SK-N-SH (cell line): ENCODE measurements at regions of chr11 and their contacts with region 1.

Region 1: GRCh38 chr11:116386118-116386699 is 386.6 kb downstream of the BUD13 start:
- DNase-seq: no peak
- H3K4me3 ChIP-seq: no peak overlapping the region
- H3K27ac ChIP-seq: peak overlapping the region in 1 of 2 experiments; percentile 96; a peak in 2 of 4 replicates
- H3K4me1 ChIP-seq: peaks cover 0 to 53% of the 10 kb centered on the region in 2 experiments; a peak in 2 of 4 replicates
- H3K27me3 ChIP-seq: no peaks in the 10 kb centered on the region
- CTCF ChIP-seq: no peak
- EP300 ChIP-seq: no peak
- RAD21 ChIP-seq: no peak

Region 2: DNA sequence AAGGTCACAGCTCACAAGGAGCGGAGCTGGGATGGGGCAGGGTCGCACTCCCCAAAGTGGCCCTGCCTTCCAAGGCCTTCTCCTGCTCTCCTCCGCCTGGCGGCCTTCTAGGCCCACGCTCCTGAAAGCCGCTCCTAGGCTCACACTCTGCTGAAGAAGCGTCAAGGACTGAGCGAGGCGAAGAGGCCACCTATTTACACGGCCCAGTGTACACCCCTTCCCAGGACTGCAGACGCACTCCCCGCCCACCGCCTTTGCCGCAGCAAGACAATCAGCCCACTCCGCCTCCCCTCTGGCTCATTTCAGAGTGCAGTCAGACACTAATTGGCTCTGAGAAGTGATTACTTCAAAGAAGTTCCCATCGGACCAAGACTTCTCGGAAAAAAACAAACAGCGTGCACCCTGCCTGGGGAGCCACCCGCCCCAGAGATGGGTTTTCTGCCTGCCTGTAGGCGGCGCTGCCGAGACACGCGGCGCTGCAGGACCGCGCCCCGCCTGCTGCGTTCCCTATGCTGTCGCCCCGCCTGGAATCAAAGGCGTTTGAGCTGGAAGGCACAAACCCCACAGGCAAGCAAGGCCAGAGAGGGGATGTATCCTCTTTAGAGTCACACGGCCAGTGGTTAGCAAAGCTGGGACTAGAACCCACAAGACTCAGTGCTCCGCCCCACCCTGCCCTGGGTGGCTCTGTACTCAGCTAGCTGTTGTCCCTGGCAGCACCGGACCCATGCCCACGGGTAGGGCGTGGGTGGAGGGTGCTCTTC is 28.2 kb before region 1 on chr11:
- CTCF ChIA-PET with region 1: no interaction called
- POLR2A ChIA-PET with region 1: interaction called, 12 read pairs
- DNase-seq: no peak
- H3K4me3 ChIP-seq: no peak overlapping the region; a peak in 1 of 4 replicates
- H3K27ac ChIP-seq: no peak overlapping the region; a peak in 1 of 4 replicates
- H3K4me1 ChIP-seq: peaks cover 0 to 36% of the 10 kb centered on the region in 2 experiments; a peak in 1 of 4 replicates
- H3K27me3 ChIP-seq: no peaks in the 10 kb centered on the region
- CTCF ChIP-seq: no peak
- EP300 ChIP-seq: no peak
- RAD21 ChIP-seq: no peak

Region 3: GRCh38 chr11:116397602-116398084 is 11.4 kb after region 1 on chr11:
- CTCF ChIA-PET with region 1: interaction called, 5 read pairs
- POLR2A ChIA-PET with region 1: interaction called, 17 read pairs
- DNase-seq: no peak
- H3K4me3 ChIP-seq: no peak overlapping the region
- H3K27ac ChIP-seq: peak overlapping the region in 1 of 2 experiments; percentile 87; a peak in 2 of 4 replicates
- H3K4me1 ChIP-seq: peaks cover 0 to 35% of the 10 kb centered on the region in 2 experiments; a peak in 1 of 4 replicates
- H3K27me3 ChIP-seq: no peaks in the 10 kb centered on the region
- CTCF ChIP-seq: no peak
- EP300 ChIP-seq: no peak
- RAD21 ChIP-seq: no peak

Region 4: DNA sequence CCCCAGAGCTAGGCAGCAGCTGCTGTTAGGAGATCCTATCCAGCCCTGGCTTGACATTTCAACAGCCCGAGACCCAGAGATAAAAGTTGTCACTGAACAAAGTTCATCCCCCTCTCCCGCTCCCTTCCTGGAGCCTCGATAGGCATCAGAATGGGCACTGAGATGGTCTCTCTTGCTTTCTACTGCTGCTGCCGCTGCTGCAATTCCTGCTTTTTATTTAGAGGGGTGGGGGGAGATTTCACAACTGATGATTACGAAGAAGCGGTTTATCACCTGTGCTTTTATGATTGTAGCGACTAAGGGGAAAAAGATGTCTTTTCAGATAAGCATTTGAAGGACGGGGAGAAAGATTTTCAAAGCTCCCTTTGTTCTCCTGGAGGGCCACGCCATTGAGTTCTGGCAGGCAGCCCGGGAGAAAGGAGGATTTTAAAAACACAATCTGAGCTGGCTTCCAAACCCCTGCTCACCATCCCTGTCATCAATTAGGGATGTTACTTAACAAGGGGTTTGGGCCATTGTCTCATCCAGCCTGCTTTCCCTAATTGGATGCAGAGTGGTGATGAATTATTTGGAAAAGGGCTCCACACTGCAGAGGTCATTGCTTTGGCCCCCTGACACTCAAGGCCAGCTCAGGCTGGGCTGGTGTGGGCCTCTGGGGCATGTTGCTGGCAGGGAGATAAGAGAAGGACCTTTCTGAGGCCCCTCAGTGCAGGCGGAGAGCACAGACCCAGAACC is 41.9 kb after region 1 on chr11:
- CTCF ChIA-PET with region 1: interaction called, 6 read pairs
- POLR2A ChIA-PET with region 1: interaction called, 51 read pairs
- DNase-seq: peak; percentile 88
- H3K4me3 ChIP-seq: no peak overlapping the region; a peak in 1 of 4 replicates
- H3K27ac ChIP-seq: peak overlapping the region; percentile 32 to 100; a peak in 3 of 4 replicates
- H3K4me1 ChIP-seq: peaks cover 5 to 63% of the 10 kb centered on the region in 2 experiments; a peak in 3 of 4 replicates
- H3K27me3 ChIP-seq: no peaks in the 10 kb centered on the region
- CTCF ChIP-seq: no peak
- EP300 ChIP-seq: peak; percentile 27 to 97; a peak in 3 of 4 replicates
- RAD21 ChIP-seq: peak; percentile 50